PC-9 (cell line): ENCODE measurements at regions of chr5 and their contacts with region 1.

Region 1: DNA sequence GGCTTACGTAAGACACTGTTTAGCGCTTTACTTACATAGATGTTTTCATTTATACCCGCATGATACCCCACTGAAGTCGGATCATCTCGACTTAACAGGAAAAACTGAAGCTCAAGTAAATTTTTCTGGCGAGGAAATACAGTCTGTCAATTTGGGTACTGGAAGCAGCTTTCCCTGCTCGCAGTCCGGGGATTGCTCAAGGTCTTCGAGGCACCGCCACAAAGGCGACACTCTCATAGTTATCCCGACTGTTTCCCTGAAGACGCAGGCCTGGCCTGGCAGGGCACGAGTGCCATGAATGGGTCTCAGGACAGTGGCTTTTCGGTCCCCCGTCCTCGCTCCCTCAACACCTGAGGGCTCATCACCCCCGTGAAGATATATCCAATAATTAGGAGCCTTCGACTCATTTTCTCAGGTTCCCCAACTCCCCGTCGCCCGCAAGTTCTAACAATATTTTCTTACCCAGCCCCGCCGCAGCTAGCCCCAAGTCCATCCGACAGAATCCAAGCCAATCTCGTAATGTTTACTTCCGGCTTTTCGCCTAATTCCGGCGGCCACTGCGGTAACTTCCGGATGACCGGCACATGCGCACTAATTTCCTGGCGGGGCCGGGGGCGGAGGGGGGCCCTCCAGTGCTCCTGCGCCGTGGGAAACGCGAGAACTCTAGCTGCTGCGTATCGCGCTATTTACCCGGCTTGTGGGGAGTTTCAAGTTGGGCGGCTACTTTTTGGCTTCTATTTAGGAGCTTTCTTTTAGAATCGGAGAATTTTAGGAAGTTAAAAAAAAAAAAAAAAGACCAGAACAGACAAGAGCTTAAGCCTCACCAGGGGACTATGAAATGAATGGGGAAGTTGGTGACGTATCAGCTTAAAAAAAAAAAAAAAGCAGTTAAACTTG is at the start of gene SLU7:
- DNase-seq: peak; percentile 87 to 97
- H3K4me3 ChIP-seq: peak within 1 kb of the TSS; percentile 66
- H3K27ac ChIP-seq: peak within 1 kb of the TSS; percentile 85
- H3K4me1 ChIP-seq: peaks cover 45% of the 10 kb centered on the region
- H3K27me3 ChIP-seq: no peaks in the 10 kb centered on the region
- CTCF ChIP-seq: no peak
- total RNA-seq, gene SLU7: 53.6 and 75.3 TPM in 2 replicates

Region 2: GRCh38 chr5:159539678-159540077 is 879.1 kb before region 1 on chr5:
- CTCF ChIA-PET with region 1: no interaction called
- POLR2A ChIA-PET with region 1: interaction called, 11 read pairs
- intact Hi-C with region 1: no loop called
- DNase-seq: no peak
- H3K4me3 ChIP-seq: no peak overlapping the region
- H3K27ac ChIP-seq: no peak overlapping the region
- H3K4me1 ChIP-seq: peaks cover 10% of the 10 kb centered on the region
- H3K27me3 ChIP-seq: no peaks in the 10 kb centered on the region
- CTCF ChIP-seq: no peak

Region 3: GRCh38 chr5:159660401-159660800 is 758.4 kb before region 1 on chr5:
- CTCF ChIA-PET with region 1: no interaction called
- POLR2A ChIA-PET with region 1: interaction called, 12 read pairs
- intact Hi-C with region 1: no loop called
- DNase-seq: peak in 1 of 2 experiments; percentile 58
- H3K4me3 ChIP-seq: no peak overlapping the region
- H3K27ac ChIP-seq: no peak overlapping the region
- H3K4me1 ChIP-seq: peaks cover 18% of the 10 kb centered on the region; the same call in 1 of the 2 replicates
- H3K27me3 ChIP-seq: no peaks in the 10 kb centered on the region
- CTCF ChIP-seq: no peak